ENCODE measurements at regions of chr13 and their contacts with region 1.

Region 1: DNA sequence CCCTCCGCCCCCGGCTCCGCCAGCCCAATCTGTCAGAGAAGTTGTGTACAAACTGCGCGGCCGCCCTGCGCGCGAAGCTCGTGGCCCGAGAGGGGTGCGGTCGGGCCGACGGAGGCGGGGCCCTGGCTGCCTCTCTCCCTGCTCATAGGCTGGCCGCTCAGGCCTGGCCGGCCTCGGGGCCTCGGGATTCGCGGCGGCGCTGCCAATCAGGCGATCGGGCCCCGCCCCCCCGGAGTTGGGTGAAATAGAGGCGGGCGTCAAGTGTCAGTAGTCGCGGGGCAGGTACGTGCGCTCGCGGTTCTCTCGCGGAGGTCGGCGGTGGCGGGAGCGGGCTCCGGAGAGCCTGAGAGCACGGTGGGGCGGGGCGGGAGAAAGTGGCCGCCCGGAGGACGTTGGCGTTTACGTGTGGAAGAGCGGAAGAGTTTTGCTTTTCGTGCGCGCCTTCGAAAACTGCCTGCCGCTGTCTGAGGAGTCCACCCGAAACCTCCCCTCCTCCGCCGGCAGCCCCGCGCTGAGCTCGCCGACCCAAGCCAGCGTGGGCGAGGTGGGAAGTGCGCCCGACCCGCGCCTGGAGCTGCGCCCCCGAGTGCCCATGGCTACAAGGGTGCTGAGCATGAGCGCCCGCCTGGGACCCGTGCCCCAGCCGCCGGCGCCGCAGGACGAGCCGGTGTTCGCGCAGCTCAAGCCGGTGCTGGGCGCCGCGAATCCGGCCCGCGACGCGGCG is at the start of gene KLF5:
- DNase-seq: peak; percentile 98
- H3K4me3 ChIP-seq: peak within 1 kb of the TSS; percentile 65
- H3K27ac ChIP-seq: no peak within 1 kb of the TSS
- H3K4me1 ChIP-seq: peaks cover 17% of the 10 kb centered on the region
- H3K27me3 ChIP-seq: no peaks in the 10 kb centered on the region
- CTCF ChIP-seq: no peak
- total RNA-seq, gene KLF5: 4.0 and 7.2 TPM in 2 replicates

Region 2: DNA sequence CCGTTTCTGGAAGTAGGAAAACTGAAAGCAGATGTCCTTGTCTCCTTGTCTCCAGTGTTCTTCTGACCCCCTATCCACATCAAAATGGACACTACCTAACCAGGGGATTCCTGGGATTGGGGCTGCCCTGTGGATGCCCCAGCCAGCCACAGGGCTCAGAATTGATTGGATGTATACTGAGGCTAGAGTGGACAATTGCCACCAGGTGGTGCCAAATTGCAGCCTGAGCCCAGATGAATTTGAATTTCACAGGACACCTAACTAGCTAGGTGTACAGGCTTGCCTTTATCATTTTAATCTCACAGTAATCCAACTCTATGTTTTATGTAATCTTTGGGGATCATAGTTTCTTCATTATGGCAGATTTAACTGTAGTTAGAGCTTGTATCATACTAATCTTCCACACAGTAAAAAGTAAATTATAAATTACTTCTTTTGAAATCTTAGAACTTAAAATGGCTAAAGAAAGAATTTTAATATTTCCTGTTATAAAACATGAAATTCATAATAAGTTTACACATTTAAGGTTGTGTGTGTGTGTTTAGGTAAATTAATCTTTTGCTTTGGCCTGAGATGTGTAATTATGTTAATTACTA is 219.0 kb before region 1 on chr13:
- CTCF ChIA-PET with region 1: interaction called, 5 read pairs
- POLR2A ChIA-PET with region 1: no interaction called
- intact Hi-C with region 1: loop called (anchors 5 kb)
- DNase-seq: peak; percentile 43
- H3K4me3 ChIP-seq: no peak overlapping the region
- H3K27ac ChIP-seq: no peak overlapping the region
- H3K4me1 ChIP-seq: no peaks in the 10 kb centered on the region
- H3K27me3 ChIP-seq: no peaks in the 10 kb centered on the region
- CTCF ChIP-seq: peak; percentile 65

Region 3: GRCh38 chr13:72920097-72920496 is 138.8 kb before region 1 on chr13:
- CTCF ChIA-PET with region 1: no interaction called
- POLR2A ChIA-PET with region 1: no interaction called
- intact Hi-C with region 1: no loop called
- DNase-seq: no peak
- H3K4me3 ChIP-seq: no peak overlapping the region
- H3K27ac ChIP-seq: no peak overlapping the region
- H3K4me1 ChIP-seq: no peaks in the 10 kb centered on the region
- H3K27me3 ChIP-seq: no peaks in the 10 kb centered on the region
- CTCF ChIP-seq: no peak

Region 4: GRCh38 chr13:73018336-73018735 is 40.6 kb before region 1 on chr13:
- CTCF ChIA-PET with region 1: interaction called, 6 read pairs
- POLR2A ChIA-PET with region 1: interaction called, 21 read pairs
- intact Hi-C with region 1: no loop called
- DNase-seq: no peak
- H3K4me3 ChIP-seq: no peak overlapping the region
- H3K27ac ChIP-seq: no peak overlapping the region
- H3K4me1 ChIP-seq: no peaks in the 10 kb centered on the region
- H3K27me3 ChIP-seq: no peaks in the 10 kb centered on the region
- CTCF ChIP-seq: no peak

Region 5: GRCh38 chr13:73335221-73335620 is 276.3 kb after region 1 on chr13:
- CTCF ChIA-PET with region 1: no interaction called
- POLR2A ChIA-PET with region 1: no interaction called
- intact Hi-C with region 1: loop called (anchors 10 kb)
- DNase-seq: peak; percentile 95
- H3K4me3 ChIP-seq: peak overlapping the region; percentile 4
- H3K27ac ChIP-seq: peak overlapping the region; percentile 69
- H3K4me1 ChIP-seq: peaks cover 27% of the 10 kb centered on the region
- H3K27me3 ChIP-seq: no peaks in the 10 kb centered on the region
- CTCF ChIP-seq: no peak

Region 6: GRCh38 chr13:73428137-73428536 is 369.2 kb after region 1 on chr13:
- CTCF ChIA-PET with region 1: no interaction called
- POLR2A ChIA-PET with region 1: no interaction called
- intact Hi-C with region 1: loop called (anchors 5 kb)
- DNase-seq: peak; percentile 35
- H3K4me3 ChIP-seq: no peak overlapping the region
- H3K27ac ChIP-seq: no peak overlapping the region
- H3K4me1 ChIP-seq: no peaks in the 10 kb centered on the region
- H3K27me3 ChIP-seq: no peaks in the 10 kb centered on the region
- CTCF ChIP-seq: no peak

Region 7: GRCh38 chr13:73633817-73634460 is 575.0 kb after region 1 on chr13:
- CTCF ChIA-PET with region 1: no interaction called
- POLR2A ChIA-PET with region 1: no interaction called
- intact Hi-C with region 1: no loop called
- DNase-seq: peak; percentile 4
- H3K4me3 ChIP-seq: no peak overlapping the region
- H3K27ac ChIP-seq: no peak overlapping the region
- H3K4me1 ChIP-seq: peaks cover 3% of the 10 kb centered on the region
- H3K27me3 ChIP-seq: no peaks in the 10 kb centered on the region
- CTCF ChIP-seq: no peak

Region 8: GRCh38 chr13:73708393-73708985 is 649.6 kb after region 1 on chr13:
- CTCF ChIA-PET with region 1: no interaction called
- POLR2A ChIA-PET with region 1: no interaction called
- intact Hi-C with region 1: loop called (anchors 2 kb)
- DNase-seq: peak; percentile 83
- H3K4me3 ChIP-seq: no peak overlapping the region
- H3K27ac ChIP-seq: no peak overlapping the region
- H3K4me1 ChIP-seq: peaks cover 5% of the 10 kb centered on the region
- H3K27me3 ChIP-seq: no peaks in the 10 kb centered on the region
- CTCF ChIP-seq: peak; percentile 95

Region 9: GRCh38 chr13:73945871-73946270 is 887.0 kb after region 1 on chr13:
- CTCF ChIA-PET with region 1: interaction called, 12 read pairs
- POLR2A ChIA-PET with region 1: no interaction called
- intact Hi-C with region 1: no loop called
- DNase-seq: peak; percentile 12
- H3K4me3 ChIP-seq: no peak overlapping the region
- H3K27ac ChIP-seq: no peak overlapping the region
- H3K4me1 ChIP-seq: peaks cover 13% of the 10 kb centered on the region
- H3K27me3 ChIP-seq: no peaks in the 10 kb centered on the region
- CTCF ChIP-seq: no peak